H1 (cell line): ENCODE measurements at regions of chr14 and their contacts with region 1.

Region 1: DNA sequence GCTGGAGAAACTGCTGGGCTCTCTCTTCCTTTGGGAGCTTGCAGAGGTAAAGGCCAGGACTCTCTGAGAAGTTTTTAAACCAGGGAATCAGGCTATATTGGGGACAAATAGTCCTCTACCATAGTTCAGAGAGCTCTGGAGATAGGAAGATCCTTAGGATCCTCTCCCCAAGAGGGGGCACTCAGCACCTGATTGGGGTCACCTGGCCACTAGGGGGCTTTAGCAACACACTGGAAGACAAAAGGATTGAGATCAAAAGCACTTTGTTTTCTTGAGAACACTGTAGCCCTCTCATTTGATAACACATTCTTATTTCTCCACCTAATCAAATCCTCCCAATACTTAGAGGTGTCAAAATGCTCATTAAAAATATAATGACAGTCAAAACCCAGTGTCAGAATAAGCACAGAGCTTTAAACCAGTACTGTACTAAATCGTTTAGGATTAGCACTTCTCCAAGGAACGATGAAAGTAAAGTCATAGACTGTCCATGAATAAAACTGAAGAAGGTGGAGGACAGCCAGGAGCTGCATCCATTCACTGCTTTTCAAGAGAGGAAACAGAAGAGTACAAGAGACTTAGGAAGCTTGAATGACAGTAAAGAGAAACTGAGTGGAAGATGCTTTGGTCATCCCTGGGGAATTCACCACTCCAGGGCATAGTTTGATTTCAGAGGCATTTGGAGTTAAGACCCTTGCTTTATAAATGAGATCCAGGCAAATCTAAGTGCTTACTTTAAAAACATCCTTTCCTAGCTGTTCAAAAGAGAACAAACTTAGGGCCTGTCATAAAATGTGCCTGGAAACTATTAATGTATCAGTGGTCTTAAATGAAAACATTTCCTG is 26.5 kb downstream of the BMP4 start:
- DNase-seq: peak in 1 of 2 experiments; percentile 84
- H3K4me3 ChIP-seq: no peak overlapping the region
- H3K27ac ChIP-seq: no peak overlapping the region
- H3K4me1 ChIP-seq: no peaks in the 10 kb centered on the region; a peak in 2 of 7 replicates
- H3K27me3 ChIP-seq: no peaks in the 10 kb centered on the region
- CTCF ChIP-seq: peak; percentile 71 to 99 (median 92)
- EP300 ChIP-seq: no peak
- POLR2A ChIP-seq: no peak
- RAD21 ChIP-seq: peak; percentile 75 to 81

Region 2: DNA sequence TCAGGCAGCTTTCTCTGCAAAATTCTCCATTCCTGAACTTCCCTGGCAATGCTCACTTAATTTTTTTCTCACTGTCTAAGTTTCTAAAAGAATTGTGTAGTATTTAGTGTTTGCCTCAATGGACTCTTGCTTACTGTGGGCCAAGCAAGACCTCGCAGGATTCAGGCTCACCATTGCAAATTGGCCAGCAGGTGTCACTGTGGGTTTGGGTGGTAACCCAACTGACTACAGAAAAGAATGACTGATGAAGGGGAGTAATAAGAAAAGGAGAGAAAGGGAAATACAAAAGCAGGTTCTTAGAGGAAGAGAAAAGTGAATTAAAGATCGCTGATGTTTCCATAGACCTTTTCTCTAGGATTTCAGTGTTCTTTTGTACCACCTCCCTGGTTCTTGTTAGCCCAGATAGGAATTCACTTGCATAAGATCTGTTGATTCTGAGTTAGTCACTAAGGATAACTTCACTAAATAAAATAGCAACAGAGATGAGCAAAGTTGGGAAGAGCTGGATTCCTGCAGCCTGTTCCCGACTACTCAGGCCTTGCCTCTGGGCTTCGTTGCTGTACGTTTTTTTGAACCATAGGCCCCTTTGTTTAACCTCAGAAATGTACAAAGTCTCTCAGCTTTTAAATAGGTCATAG is 390.5 kb before region 1 on chr14:
- CTCF ChIA-PET with region 1: interaction called, 11 read pairs
- POLR2A ChIA-PET with region 1: no interaction called
- DNase-seq: peak; percentile 70 to 91
- H3K4me3 ChIP-seq: no peak overlapping the region
- H3K27ac ChIP-seq: no peak overlapping the region
- H3K4me1 ChIP-seq: no peaks in the 10 kb centered on the region
- H3K27me3 ChIP-seq: no peaks in the 10 kb centered on the region
- CTCF ChIP-seq: peak; percentile 75 to 83 (median 82)
- EP300 ChIP-seq: no peak
- POLR2A ChIP-seq: no peak
- RAD21 ChIP-seq: peak; percentile 96 to 97

Region 3: GRCh38 chr14:53696217-53696965 is 233.7 kb before region 1 on chr14:
- CTCF ChIA-PET with region 1: no interaction called
- POLR2A ChIA-PET with region 1: no interaction called
- DNase-seq: no peak
- H3K4me3 ChIP-seq: no peak overlapping the region
- H3K27ac ChIP-seq: no peak overlapping the region
- H3K4me1 ChIP-seq: no peaks in the 10 kb centered on the region
- H3K27me3 ChIP-seq: no peaks in the 10 kb centered on the region
- CTCF ChIP-seq: no peak
- EP300 ChIP-seq: no peak
- POLR2A ChIP-seq: no peak
- RAD21 ChIP-seq: no peak

Region 4: GRCh38 chr14:53912021-53912420 is 18.1 kb before region 1 on chr14:
- CTCF ChIA-PET with region 1: interaction called, 11 read pairs
- POLR2A ChIA-PET with region 1: no interaction called
- DNase-seq: no peak
- H3K4me3 ChIP-seq: no peak overlapping the region
- H3K27ac ChIP-seq: no peak overlapping the region
- H3K4me1 ChIP-seq: no peaks in the 10 kb centered on the region
- H3K27me3 ChIP-seq: no peaks in the 10 kb centered on the region
- CTCF ChIP-seq: no peak
- EP300 ChIP-seq: no peak
- POLR2A ChIP-seq: no peak
- RAD21 ChIP-seq: no peak

Region 5: DNA sequence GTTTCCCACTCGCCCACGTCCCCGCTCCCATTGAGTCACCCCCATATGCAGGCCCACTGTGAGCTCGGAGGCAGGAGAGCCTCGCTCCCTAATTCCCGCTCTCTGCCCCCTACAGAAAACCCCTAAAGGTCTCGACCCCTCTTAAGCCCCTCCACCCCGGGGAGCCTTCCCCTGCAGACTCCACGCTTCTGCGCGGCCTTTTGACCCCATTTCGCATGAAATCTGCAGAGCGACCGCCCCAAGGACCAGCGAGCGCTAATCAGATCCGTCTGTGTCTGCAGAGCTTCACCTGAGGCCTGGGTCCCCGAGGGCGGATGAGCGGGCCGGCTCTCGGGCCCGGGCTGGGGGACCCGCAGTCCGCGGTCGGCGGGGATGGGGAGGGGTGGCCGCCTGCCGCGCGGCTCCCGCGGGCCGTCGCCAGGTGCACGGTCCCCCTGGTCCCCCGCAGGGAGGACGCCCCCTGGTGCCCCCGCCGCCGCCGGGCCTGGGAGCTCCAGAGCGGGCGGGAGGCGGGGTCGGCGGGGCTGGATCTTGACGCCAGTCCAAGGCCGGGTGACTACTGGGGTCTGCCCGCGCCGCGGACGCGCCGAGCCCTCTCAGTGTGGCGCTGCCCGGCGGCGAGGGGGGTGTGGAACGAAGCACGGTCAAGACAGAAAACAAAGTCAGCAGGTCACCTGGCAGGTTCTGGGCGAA is 16.5 kb after region 1 on chr14:
- CTCF ChIA-PET with region 1: interaction called, 29 read pairs
- POLR2A ChIA-PET with region 1: interaction called, 4 read pairs
- DNase-seq: peak in 1 of 2 experiments; percentile 72
- H3K4me3 ChIP-seq: peak overlapping the region; percentile 45 to 67 (median 54)
- H3K27ac ChIP-seq: no peak overlapping the region
- H3K4me1 ChIP-seq: peaks cover 5 to 26% (median 21%) of the 10 kb centered on the region in 4 experiments
- H3K27me3 ChIP-seq: peaks cover 18 to 54% (median 46%) of the 10 kb centered on the region in 4 experiments
- CTCF ChIP-seq: no peak
- EP300 ChIP-seq: no peak
- POLR2A ChIP-seq: no peak
- RAD21 ChIP-seq: no peak

Region 6: GRCh38 chr14:53953002-53953827 is 23.1 kb after region 1 on chr14:
- CTCF ChIA-PET with region 1: interaction called, 14 read pairs
- POLR2A ChIA-PET with region 1: no interaction called
- DNase-seq: peak in 1 of 2 experiments; percentile 86
- H3K4me3 ChIP-seq: peak overlapping the region; percentile 54 to 86 (median 78)
- H3K27ac ChIP-seq: no peak overlapping the region
- H3K4me1 ChIP-seq: peaks cover 5 to 9% (median 7%) of the 10 kb centered on the region in 4 experiments
- H3K27me3 ChIP-seq: peaks cover 26 to 78% (median 67%) of the 10 kb centered on the region in 4 experiments
- CTCF ChIP-seq: no peak
- EP300 ChIP-seq: no peak
- POLR2A ChIP-seq: no peak
- RAD21 ChIP-seq: no peak; a peak in 1 of 4 replicates

Region 7: GRCh38 chr14:54001189-54001913 is 71.3 kb after region 1 on chr14:
- CTCF ChIA-PET with region 1: interaction called, 13 read pairs
- POLR2A ChIA-PET with region 1: no interaction called
- DNase-seq: no peak
- H3K4me3 ChIP-seq: no peak overlapping the region
- H3K27ac ChIP-seq: no peak overlapping the region
- H3K4me1 ChIP-seq: 0 out of 7 replicates have a peak, but pooled peaks cover 0 to 4% (median 0%) of the 10 kb centered on the region in 4 experiments
- H3K27me3 ChIP-seq: no peaks in the 10 kb centered on the region
- CTCF ChIP-seq: peak; percentile 47 to 64 (median 51)
- EP300 ChIP-seq: no peak
- POLR2A ChIP-seq: no peak
- RAD21 ChIP-seq: peak; percentile 57 to 64